Heart left ventricle (tissue), 16 donors: ENCODE measurements at regions of chr21 and their contacts with region 1.

Region 1: GRCh38 chr21:34745557-34746255 is 76.9 kb downstream of the CLIC6 start:
- DNase-seq: peak; percentile 63 to 82 (median 71)
- ATAC-seq: peak; percentile 81 to 93 (median 90)
- H3K4me3 ChIP-seq: peak overlapping the region in 9 of 12 donors; percentile 0 to 55 (median 40)
- H3K27ac ChIP-seq: peak overlapping the region in 2 of 12 donors; percentile 43 to 46
- H3K4me1 ChIP-seq: peaks cover 0 to 14% (median 2%) of the 10 kb centered on the region in 12 donors
- H3K27me3 ChIP-seq: peaks cover 0 to 13% (median 0%) of the 10 kb centered on the region in 9 donors
- CTCF ChIP-seq: peak; percentile 62 to 90 (median 83)
- POLR2A ChIP-seq: no peak

Region 2: DNA sequence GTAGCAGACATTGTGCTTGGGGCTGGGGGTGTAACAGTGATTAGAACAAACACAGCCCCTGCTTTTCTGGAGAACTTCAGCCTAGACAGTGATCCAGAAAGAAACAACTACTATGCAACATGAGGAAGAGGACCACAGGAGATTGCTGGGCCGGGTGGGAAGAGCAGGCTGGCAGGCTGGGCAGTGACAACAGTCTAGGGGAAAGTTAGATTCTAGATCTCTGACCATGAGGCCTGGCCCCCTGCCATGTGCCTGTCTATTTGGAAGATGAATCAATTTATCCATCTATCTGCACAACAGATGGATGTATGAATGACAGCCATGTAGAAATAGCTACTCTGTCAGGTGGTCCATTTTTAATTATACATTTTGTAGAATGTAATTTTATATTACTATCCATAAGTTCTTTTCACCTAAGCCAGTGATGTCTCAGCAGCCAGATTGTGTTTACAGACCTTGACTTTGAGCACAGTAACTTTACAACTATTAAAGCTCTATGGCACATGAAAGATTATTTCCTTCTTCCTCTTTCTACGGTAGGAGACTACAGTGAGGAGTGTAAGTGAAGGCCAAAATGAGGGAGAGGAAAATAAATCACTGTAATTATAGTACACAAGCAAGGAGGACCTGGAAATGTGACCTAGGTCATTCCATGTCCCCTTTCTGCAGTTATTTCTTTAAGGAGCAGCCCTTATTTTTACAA is 61.4 kb before region 1 on chr21:
- intact Hi-C with region 1: no loop called
- DNase-seq: no peak
- ATAC-seq: no peak
- H3K4me3 ChIP-seq: no peak overlapping the region
- H3K27ac ChIP-seq: no peak overlapping the region
- H3K4me1 ChIP-seq: no peaks in the 10 kb centered on the region
- H3K27me3 ChIP-seq: no peaks in the 10 kb centered on the region
- CTCF ChIP-seq: no peak
- POLR2A ChIP-seq: no peak

Region 3: GRCh38 chr21:34807146-34807880 is 61.6 kb after region 1 on chr21:
- intact Hi-C with region 1: no loop called
- DNase-seq: no peak
- ATAC-seq: peak in 3 of 4 donors; percentile 24 to 83 (median 80)
- H3K4me3 ChIP-seq: no peak overlapping the region
- H3K27ac ChIP-seq: peak overlapping the region in 2 of 12 donors; percentile 11 to 28
- H3K4me1 ChIP-seq: peaks cover 0 to 89% (median 0%) of the 10 kb centered on the region in 12 donors
- H3K27me3 ChIP-seq: no peaks in the 10 kb centered on the region
- CTCF ChIP-seq: no peak
- POLR2A ChIP-seq: no peak

Region 4: GRCh38 chr21:35390013-35390776 is 644.5 kb after region 1 on chr21:
- intact Hi-C with region 1: loop called in 2 of 10 experiments (anchors 10 kb)
- DNase-seq: no peak
- ATAC-seq: peak in 1 of 4 donors; percentile 31
- H3K4me3 ChIP-seq: no peak overlapping the region
- H3K27ac ChIP-seq: no peak overlapping the region
- H3K4me1 ChIP-seq: no peaks in the 10 kb centered on the region
- H3K27me3 ChIP-seq: peaks cover 0 to 6% (median 0%) of the 10 kb centered on the region in 9 donors
- CTCF ChIP-seq: no peak
- POLR2A ChIP-seq: no peak

Region 5: DNA sequence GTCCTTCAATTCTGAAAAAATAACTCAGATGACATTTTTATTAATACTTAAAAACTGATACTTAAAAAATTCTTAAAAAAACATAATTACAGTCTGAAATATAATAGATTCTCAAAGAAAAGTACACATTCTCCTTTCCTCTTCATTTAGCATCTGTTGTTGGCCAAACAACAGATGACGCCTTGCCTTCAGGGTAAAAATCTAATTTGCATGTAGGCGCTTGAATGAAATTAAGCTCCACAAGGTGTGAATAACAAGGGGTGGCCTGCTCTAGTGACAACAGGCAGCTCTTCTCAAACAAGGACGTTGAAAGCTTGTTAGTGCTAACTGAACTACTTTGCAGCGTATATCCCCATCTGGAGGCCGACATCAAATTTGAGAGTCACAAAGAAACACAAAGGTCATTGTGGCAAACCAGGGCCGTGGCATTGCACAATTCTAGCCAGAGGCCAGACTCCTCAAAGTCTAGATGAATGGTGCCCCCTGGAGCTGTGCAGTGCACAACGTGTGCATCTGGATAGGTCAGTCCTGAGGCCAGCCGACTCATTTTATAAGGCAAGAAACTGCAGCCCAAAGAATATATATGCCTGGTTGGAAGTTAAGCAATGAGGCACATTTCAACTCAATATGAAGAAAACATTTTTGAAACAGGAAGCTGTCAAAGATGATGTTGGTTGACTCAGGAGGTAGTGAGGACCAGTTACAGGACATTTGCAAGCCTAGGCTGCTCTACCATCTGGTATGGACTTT is 762.6 kb after region 1 on chr21:
- intact Hi-C with region 1: loop called in 1 of 10 experiments (anchors 2 kb)
- DNase-seq: peak; percentile 53 to 75 (median 66)
- ATAC-seq: peak; percentile 45 to 93 (median 77)
- H3K4me3 ChIP-seq: no peak overlapping the region
- H3K27ac ChIP-seq: peak overlapping the region in 3 of 12 donors; percentile 20 to 90 (median 48)
- H3K4me1 ChIP-seq: peaks cover 0 to 62% (median 0%) of the 10 kb centered on the region in 12 donors
- H3K27me3 ChIP-seq: peaks cover 0 to 27% (median 0%) of the 10 kb centered on the region in 9 donors
- CTCF ChIP-seq: peak in 8 of 12 donors; percentile 10 to 45 (median 31)
- POLR2A ChIP-seq: no peak

Region 6: DNA sequence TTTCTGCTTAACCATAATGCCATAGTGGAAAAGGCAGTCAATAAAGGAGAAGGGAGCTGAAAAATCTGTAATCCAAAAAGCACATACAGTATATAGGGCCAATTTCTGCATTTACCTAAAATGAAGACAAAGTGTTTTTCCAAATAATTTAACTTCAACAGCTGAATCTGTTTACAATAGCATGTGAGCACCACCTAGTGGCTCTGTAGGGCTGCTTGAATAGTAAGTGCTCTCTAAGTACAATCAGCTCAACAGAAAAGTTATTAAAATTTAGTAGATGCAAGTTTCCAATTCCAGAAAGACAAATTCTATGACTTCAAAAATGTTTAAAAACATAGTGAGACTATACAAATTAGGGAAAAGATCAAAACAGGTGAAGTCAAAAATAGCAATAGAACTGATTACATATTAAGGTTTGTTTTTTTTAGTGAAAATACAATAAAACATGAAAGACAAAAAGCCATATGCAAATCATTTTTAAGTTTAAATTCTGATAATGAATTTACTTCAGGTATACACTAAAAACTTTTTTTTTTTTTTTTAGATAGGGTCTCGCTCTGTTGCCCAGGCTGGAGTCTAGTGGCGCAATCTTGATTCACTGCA is 1094.6 kb after region 1 on chr21:
- intact Hi-C with region 1: loop called (anchors 1 to 10 kb)
- DNase-seq: peak in 4 of 5 donors; percentile 48 to 64 (median 56)
- ATAC-seq: peak in 3 of 4 donors; percentile 51 to 62 (median 58)
- H3K4me3 ChIP-seq: no peak overlapping the region
- H3K27ac ChIP-seq: no peak overlapping the region
- H3K4me1 ChIP-seq: peaks cover 0 to 7% (median 0%) of the 10 kb centered on the region in 12 donors
- H3K27me3 ChIP-seq: no peaks in the 10 kb centered on the region
- CTCF ChIP-seq: peak; percentile 62 to 87 (median 82)
- POLR2A ChIP-seq: no peak

Region 7: DNA sequence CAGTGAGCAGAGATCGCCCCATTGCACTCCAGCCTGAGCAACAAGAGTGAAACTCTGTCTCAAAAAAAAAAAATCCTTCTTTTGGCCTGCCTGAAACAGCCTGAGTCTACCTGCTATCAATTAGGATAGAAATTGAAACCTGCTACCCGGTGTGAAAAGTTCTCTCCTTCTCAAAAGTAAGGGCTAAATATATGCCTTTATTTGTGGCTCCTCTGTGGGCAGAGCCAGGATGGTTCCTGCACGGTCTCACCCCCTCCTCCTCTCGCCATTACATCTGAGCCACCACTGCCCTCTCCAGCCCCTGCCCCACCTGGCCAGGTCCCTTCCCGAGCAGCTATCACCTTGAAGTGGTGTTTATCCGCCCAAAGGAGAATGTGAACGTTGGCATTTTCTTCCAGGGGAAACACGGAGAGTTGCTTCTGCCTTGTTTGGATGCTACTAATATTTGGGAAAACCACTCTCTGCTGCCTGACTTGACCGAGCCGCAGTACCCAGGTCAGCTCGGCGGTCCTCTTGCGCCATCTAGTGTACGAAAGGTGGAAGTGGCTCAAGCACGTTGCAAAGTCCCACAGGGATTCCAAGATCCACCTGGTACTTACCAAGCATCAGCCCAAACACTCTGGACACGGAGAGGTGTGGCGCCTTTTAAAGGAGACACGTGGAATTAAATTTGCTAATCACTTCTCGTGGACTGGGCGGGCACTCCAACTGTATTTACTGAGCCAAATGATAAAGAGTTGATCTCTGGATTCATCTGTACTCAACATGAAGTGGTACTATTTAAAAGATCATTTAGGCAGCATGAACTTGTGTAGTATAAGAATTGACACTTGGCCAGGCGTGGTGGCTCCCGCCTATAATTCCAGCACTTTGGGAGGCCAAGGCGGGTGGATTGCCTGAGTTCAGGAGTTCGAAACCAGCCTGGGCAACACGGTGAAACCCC is 1282.7 kb after region 1 on chr21:
- intact Hi-C with region 1: loop called in 9 of 10 experiments (anchors 2 to 10 kb)
- DNase-seq: peak; percentile 58 to 78 (median 70)
- ATAC-seq: peak; percentile 75 to 90 (median 85)
- H3K4me3 ChIP-seq: no peak overlapping the region
- H3K27ac ChIP-seq: no peak overlapping the region
- H3K4me1 ChIP-seq: peaks cover 0 to 4% (median 0%) of the 10 kb centered on the region in 12 donors
- H3K27me3 ChIP-seq: no peaks in the 10 kb centered on the region
- CTCF ChIP-seq: peak; percentile 87 to 98 (median 94)
- POLR2A ChIP-seq: no peak